MCF 10A (cell line): ENCODE measurements at regions of chr6 and their contacts with region 1.

Region 1: DNA sequence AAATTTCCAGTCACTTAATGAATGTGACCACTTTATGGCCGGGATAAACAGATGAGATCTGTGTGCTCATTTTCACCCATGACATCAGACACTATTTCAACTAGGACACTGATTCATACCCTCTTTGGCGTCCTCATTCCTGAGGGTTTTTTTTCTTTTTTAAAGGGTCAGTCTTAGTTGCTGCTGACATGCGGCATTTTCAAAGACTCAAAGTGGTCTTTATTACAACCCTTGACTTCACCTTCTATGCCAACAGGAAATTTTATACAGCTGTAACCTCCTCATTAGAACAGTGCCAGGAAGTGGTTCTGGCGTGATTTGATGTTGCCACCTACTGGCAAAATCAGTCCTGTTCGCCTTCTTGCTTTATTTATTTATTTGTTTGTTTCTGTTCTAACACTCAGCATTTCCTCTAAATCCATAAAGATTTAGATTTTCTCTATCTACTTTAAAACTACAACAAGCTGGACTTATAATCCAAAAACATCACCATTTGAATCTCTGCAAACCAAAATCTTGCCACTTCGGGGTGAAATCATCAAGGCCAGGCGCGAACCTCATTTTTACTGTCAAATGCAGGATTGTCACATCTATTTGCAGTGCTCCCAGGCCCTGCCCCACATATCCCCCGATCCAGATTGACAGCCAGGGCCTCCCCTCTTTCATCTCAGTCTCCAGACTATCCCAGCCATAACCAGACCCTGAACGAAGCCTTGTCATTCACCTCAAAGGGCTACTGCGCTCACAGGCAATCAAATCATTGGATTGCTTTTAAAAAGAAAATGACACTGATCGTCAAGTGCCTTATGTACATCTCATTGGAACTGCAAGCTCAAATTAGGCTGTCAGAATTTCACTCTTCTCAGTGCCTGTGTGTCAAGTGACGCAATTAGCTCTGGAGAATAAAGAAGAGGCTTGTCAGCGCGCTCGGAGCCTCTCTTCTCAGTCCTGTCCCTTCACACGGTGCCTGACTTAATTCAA is 77.5 kb downstream of the C6orf118 start:
- DNase-seq: peak; percentile 69
- H3K4me3 Mint-ChIP-seq: no peak overlapping the region
- H3K27ac Mint-ChIP-seq: peak overlapping the region; percentile 20
- H3K4me1 Mint-ChIP-seq: peaks cover 18% of the 10 kb centered on the region
- H3K27me3 Mint-ChIP-seq: no peaks in the 10 kb centered on the region
- CTCF ChIP-seq: peak; percentile 83

Region 2: GRCh38 chr6:164942271-164942765 is 289.6 kb before region 1 on chr6:
- CTCF ChIA-PET with region 1: interaction called, 11 read pairs
- POLR2A ChIA-PET with region 1: no interaction called
- intact Hi-C with region 1: no loop called
- DNase-seq: no peak
- H3K4me3 Mint-ChIP-seq: no peak overlapping the region
- H3K27ac Mint-ChIP-seq: no peak overlapping the region
- H3K4me1 Mint-ChIP-seq: no peaks in the 10 kb centered on the region
- H3K27me3 Mint-ChIP-seq: no peaks in the 10 kb centered on the region
- CTCF ChIP-seq: no peak

Region 3: GRCh38 chr6:165055231-165055630 is 176.6 kb before region 1 on chr6:
- CTCF ChIA-PET with region 1: interaction called, 21 read pairs
- POLR2A ChIA-PET with region 1: interaction called, 7 read pairs
- intact Hi-C with region 1: loop called (anchors 1 kb)
- DNase-seq: peak; percentile 69
- H3K4me3 Mint-ChIP-seq: no peak overlapping the region
- H3K27ac Mint-ChIP-seq: peak overlapping the region; percentile 12
- H3K4me1 Mint-ChIP-seq: peaks cover 22% of the 10 kb centered on the region
- H3K27me3 Mint-ChIP-seq: no peaks in the 10 kb centered on the region
- CTCF ChIP-seq: peak; percentile 16

Region 4: GRCh38 chr6:165119231-165120020 is 112.4 kb before region 1 on chr6:
- CTCF ChIA-PET with region 1: interaction called, 3 read pairs
- POLR2A ChIA-PET with region 1: no interaction called
- intact Hi-C with region 1: loop called (anchors 10 kb)
- DNase-seq: peak; percentile 81
- H3K4me3 Mint-ChIP-seq: no peak overlapping the region
- H3K27ac Mint-ChIP-seq: no peak overlapping the region
- H3K4me1 Mint-ChIP-seq: peaks cover 12% of the 10 kb centered on the region
- H3K27me3 Mint-ChIP-seq: no peaks in the 10 kb centered on the region
- CTCF ChIP-seq: no peak

Region 5: GRCh38 chr6:165181951-165182414 is 49.9 kb before region 1 on chr6:
- CTCF ChIA-PET with region 1: interaction called, 8 read pairs
- POLR2A ChIA-PET with region 1: interaction called, 7 read pairs
- intact Hi-C with region 1: loop called (anchors 5 kb)
- DNase-seq: peak; percentile 92
- H3K4me3 Mint-ChIP-seq: peak overlapping the region; percentile 55
- H3K27ac Mint-ChIP-seq: peak overlapping the region; percentile 97
- H3K4me1 Mint-ChIP-seq: peaks cover 64% of the 10 kb centered on the region
- H3K27me3 Mint-ChIP-seq: no peaks in the 10 kb centered on the region
- CTCF ChIP-seq: no peak

Region 6: DNA sequence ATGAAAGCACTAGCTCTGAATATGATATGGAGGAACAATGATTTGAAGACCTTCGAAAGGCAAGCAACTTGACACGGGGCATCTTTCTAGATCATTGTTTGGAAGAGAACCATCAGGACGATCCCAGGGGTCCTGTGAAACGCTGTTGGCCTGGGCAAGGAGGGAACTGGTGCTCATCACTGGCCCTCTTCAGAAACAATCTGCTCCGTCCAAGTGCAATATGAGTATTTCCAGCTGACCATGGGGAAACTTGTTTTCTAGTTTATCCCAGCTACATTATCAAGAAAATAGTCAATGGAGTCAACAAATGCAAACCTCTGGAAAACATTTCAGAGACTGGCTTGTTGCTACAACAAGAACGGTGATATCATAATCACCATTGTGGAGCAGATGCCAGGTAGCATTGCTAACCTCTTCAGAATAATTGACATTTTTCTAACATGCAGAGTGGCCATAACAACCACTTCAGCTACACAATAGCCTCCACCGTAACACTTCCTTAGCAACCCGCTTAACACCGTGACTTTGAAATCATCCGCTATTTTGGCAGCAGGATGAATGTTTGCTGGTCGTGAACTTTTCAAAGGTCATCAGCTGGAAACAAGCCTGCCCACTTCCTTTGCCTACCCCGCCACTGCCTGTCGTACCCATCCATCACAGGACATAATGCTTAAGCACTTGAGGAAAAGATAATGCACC is 543.2 kb after region 1 on chr6:
- CTCF ChIA-PET with region 1: no interaction called
- POLR2A ChIA-PET with region 1: no interaction called
- intact Hi-C with region 1: no loop called
- DNase-seq: no peak
- H3K4me3 Mint-ChIP-seq: no peak overlapping the region
- H3K27ac Mint-ChIP-seq: no peak overlapping the region
- H3K4me1 Mint-ChIP-seq: no peaks in the 10 kb centered on the region
- H3K27me3 Mint-ChIP-seq: no peaks in the 10 kb centered on the region
- CTCF ChIP-seq: no peak